Left colon (tissue), 2 donors: ENCODE measurements at regions of chr18 and their contacts with region 1.

Region 1: GRCh38 chr18:12934454-12935071 is 13.2 kb upstream of the SEH1L start:
- DNase-seq: peak; percentile 66 to 90
- ATAC-seq: peak; percentile 85

Region 2: DNA sequence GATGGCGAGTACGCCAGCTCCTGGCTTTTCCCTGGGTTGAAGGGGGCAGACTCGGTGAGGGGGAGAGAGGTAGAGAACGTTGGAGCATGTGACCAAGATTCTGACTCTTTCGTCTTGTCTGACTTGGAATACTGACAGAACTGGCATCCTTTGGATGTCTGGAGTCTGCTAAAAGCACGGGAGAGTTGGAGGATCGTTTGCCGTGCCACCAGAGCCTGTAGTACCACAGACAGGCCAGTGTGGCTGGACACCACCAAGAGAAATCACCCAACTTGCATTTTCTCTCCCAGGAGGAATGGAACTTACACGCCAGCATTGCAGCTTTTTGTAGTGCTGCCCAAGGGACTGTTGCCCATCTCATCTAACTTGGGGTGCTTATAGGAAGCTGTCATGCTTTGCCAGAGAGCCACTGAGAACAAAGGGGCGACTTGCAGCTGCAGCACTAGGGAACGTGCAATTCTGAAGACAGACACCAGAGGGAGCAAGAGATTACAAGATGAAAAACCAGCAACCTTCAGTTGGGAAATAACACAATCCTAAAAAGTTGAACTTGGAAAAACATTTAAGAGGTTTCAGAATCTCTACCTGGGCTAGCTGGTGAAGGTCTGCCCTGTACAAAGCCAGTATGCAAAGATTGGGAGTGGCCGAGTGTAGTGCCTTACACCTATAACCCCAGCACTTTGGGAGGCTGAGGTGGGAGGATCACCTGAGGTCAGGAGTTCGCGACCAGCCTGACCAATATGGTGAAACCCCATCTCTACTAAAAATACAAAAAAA is 207.6 kb before region 1 on chr18:
- intact Hi-C with region 1: loop called (anchors 5 to 10 kb)
- DNase-seq: peak in 1 of 2 donors; percentile 36
- ATAC-seq: peak; percentile 62

Region 3: DNA sequence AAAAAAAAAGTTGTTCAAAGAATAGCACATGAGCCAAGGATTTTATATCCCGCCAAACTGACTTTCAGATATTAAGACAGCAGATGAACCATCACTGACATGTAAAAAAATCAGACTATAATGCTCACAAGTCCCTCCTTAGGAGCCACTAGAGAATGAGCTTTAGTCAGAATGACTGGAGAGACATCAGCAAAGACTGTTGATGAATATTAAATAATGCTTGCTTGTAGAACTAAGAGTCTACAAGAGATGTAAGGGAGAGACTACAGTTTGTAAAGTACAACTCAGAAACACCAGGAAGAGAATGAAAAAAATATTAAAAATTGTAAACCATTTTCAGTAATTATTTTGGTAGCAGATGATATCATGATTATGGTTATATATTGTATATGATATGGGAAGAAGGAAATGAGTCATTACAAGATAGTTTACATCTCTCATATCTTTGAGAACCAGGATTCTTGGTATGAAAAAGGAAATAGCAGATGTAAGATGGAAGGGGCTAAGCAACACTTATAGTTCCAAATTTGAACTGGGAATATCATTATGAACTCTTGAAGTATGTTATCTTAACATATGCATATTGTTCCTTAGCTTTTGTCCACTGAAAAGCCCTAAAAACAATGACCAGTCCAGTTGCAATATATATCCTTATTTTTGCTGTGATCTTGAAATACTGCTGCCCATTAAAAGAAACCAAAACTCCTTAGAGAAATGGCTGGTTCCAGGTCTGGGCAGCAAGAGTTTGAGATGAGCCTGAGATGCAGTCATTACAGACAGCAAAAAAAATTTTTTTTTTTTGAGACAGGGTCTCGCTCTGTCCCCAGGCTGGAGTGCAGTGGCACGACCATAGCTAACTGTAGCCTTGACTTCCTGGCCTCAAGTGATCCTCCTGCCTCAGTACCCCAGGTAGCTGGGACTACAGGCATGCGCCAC is 106.2 kb before region 1 on chr18:
- intact Hi-C with region 1: no loop called
- DNase-seq: no peak
- ATAC-seq: no peak